ENCODE measurements at regions of chr9 and their contacts with region 1.

Region 1: DNA sequence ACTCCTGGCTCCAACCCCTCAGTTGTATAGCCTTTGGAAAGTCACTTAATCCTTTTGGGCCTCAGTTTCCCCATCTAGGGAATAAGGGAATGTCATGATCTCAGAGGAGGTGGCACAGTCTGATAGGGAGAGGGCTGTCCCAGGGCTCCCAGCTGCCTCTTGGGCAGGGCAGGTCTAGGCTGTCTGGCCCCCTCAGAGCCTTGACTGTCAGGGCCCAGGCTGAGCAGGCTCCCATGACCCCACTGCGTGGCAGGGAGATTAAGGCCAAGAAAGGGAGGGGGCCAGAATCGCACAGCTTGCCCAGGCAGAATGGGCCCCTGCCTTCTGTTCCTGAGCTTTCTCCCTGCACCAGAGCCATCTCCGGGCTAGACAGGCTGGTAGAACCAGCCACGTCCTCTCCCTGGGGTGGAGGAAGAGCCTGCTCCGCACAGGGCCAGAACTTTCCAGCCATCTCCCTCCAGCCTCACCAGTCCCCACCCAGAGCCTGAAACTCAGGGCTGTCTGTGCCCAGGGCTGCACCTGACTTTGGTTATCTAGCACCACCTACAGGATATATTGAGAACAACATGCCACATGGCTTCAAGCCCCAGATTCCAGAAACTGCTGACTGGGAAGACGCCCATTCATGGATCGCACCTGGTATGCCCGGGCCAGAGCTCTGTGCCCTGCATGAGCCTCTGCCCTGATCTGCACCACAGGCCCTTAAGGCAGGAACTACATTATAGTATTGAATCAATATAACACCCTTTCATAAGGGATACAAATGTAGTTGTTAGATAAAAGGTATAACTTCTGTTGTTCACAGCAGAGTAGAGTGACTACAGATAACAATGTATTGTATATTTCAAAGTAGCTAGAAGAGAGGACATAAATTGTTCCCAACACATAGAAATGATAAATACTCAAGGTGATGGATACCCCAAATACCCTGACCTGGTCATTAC is 32.0 kb downstream of the NAIF1 start:
- DNase-seq: peak; percentile 62 to 75 (median 66)
- ATAC-seq: peak; percentile 92 to 99 (median 96)
- H3K4me3 ChIP-seq: no peak overlapping the region
- H3K27ac ChIP-seq: no peak overlapping the region
- H3K4me1 ChIP-seq: peaks cover 0 to 21% (median 2%) of the 10 kb centered on the region in 12 donors
- H3K27me3 ChIP-seq: no peaks in the 10 kb centered on the region
- CTCF ChIP-seq: peak; percentile 80 to 91 (median 87)
- POLR2A ChIP-seq: no peak

Region 2: GRCh38 chr9:127943731-127944144 is 91.4 kb before region 1 on chr9:
- intact Hi-C with region 1: loop called (anchors 1 to 2 kb)
- DNase-seq: peak; percentile 83 to 92 (median 90)
- ATAC-seq: peak; percentile 70 to 85 (median 75)
- H3K4me3 ChIP-seq: no peak overlapping the region
- H3K27ac ChIP-seq: peak overlapping the region in 1 of 12 donors; percentile 38
- H3K4me1 ChIP-seq: peaks cover 0 to 42% (median 20%) of the 10 kb centered on the region in 12 donors
- H3K27me3 ChIP-seq: no peaks in the 10 kb centered on the region
- CTCF ChIP-seq: peak; percentile 84 to 97 (median 88)
- POLR2A ChIP-seq: no peak

Measured in heart left ventricle (tissue), 16 donors.